Naive thymus-derived CD4-positive, alpha-beta T cell (primary cell): ENCODE measurements at regions of chr17 and their contacts with region 1.

Region 1: DNA sequence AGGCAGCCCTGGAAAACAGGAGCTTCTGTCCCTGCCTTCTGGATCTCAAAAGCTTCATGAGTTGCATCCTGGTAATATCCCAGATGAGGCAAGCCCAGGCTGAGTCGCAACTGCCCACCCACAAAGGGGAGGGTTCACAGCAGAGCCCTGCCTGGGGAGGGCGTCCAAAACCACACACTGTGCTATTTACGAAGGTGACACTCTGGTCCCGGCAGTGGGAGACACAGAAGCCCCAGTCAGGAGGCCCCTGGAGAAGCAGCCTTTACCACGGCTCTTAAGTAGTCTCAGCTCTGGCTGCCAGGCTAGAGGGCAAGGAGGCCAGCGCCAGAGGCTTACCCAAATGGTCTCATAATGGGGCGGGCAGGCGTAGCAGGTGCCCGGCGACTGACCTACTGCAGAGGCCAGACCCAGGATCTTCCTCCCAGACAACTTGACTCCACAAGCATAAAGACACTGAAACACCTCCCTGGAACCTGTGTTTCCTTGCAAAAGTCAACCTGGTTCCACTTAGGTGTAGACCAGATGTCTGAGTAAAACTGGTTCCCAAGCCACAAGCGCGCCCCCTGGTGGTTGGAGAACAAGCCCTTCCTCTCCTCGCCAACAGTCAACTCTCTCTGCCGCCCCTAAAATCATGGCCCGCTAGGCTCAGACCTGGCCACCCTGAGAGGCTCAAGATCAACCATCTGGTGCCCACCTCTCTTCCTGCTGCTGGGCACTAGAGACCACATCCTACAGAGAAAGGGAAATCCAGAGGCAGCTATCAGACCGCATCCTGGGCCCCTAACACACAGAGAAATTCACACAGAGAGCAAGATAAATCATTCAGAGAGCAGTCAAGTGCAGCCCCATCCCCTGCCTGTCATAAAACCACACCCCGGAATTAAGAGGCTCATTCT is 5.2 kb downstream of the AXIN2 start:
- DNase-seq: peak; percentile 82 to 96 (median 88)
- ATAC-seq: peak; percentile 66
- H3K4me3 ChIP-seq: peak overlapping the region; percentile 48
- H3K4me3 Mint-ChIP-seq: peak overlapping the region in 1 of 10 donors; percentile 41
- H3K27ac ChIP-seq: no peak overlapping the region
- H3K27ac Mint-ChIP-seq: no peak overlapping the region
- H3K4me1 ChIP-seq: peaks cover 19 to 38% of the 10 kb centered on the region in 2 donors
- H3K4me1 Mint-ChIP-seq: peaks cover 0 to 29% (median 21%) of the 10 kb centered on the region in 7 donors
- H3K27me3 ChIP-seq: no peaks in the 10 kb centered on the region
- H3K27me3 Mint-ChIP-seq: peaks cover 0 to 15% (median 0%) of the 10 kb centered on the region in 5 donors

Region 2: DNA sequence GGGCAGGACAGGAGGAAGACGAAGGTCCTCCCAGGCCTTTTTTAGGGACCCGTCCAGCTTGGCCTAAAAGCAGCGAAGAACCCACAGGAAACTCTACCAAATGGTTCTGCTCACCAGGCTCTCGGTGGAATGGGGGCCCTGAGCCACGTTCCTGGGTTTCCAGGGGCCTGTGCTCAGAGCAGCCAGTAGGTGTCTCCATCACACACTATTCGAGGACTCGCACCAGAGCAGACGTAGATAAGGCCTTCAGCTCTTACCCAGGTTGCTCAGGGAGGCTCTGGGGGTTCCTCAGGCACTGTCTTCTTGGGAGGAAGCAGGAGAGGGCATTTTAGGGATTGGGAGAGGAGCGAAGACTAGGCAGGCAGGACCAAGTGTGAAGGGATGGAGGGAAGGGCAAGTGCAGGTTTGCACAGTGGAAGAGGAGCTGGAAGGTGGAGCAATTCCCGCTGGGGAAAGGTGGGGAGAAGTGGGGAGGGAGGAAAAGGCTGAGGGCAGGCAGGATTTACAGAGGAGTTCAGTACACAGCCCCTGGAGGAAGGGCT is 262.0 kb before region 1 on chr17:
- CTCF ChIA-PET with region 1: interaction called, 5 read pairs
- POLR2A ChIA-PET with region 1: no interaction called
- intact Hi-C with region 1: loop called (anchors 1 kb)
- DNase-seq: peak; percentile 15 to 70 (median 60)
- ATAC-seq: peak; percentile 86
- H3K4me3 ChIP-seq: no peak overlapping the region
- H3K4me3 Mint-ChIP-seq: no peak overlapping the region
- H3K27ac ChIP-seq: no peak overlapping the region
- H3K27ac Mint-ChIP-seq: peak overlapping the region in 1 of 9 donors; percentile 80
- H3K4me1 ChIP-seq: no peaks in the 10 kb centered on the region
- H3K4me1 Mint-ChIP-seq: peaks cover 0 to 5% (median 5%) of the 10 kb centered on the region in 7 donors
- H3K27me3 ChIP-seq: no peaks in the 10 kb centered on the region
- H3K27me3 Mint-ChIP-seq: peaks cover 0 to 18% (median 0%) of the 10 kb centered on the region in 5 donors

Region 3: GRCh38 chr17:65442691-65443090 is 113.6 kb before region 1 on chr17:
- CTCF ChIA-PET with region 1: no interaction called
- POLR2A ChIA-PET with region 1: no interaction called
- intact Hi-C with region 1: no loop called
- DNase-seq: no peak
- ATAC-seq: no peak
- H3K4me3 ChIP-seq: no peak overlapping the region
- H3K4me3 Mint-ChIP-seq: no peak overlapping the region
- H3K27ac ChIP-seq: no peak overlapping the region
- H3K27ac Mint-ChIP-seq: no peak overlapping the region
- H3K4me1 ChIP-seq: no peaks in the 10 kb centered on the region
- H3K4me1 Mint-ChIP-seq: no peaks in the 10 kb centered on the region
- H3K27me3 ChIP-seq: no peaks in the 10 kb centered on the region
- H3K27me3 Mint-ChIP-seq: peaks cover 8 to 37% (median 18%) of the 10 kb centered on the region in 5 donors

Region 4: GRCh38 chr17:65455972-65456343 is 100.3 kb before region 1 on chr17:
- CTCF ChIA-PET with region 1: interaction called, 6 read pairs
- POLR2A ChIA-PET with region 1: no interaction called
- intact Hi-C with region 1: loop called (anchors 1 kb)
- DNase-seq: peak in 7 of 9 donors; percentile 28 to 63 (median 48)
- ATAC-seq: peak; percentile 60
- H3K4me3 ChIP-seq: no peak overlapping the region
- H3K4me3 Mint-ChIP-seq: no peak overlapping the region
- H3K27ac ChIP-seq: no peak overlapping the region
- H3K27ac Mint-ChIP-seq: peak overlapping the region in 1 of 9 donors; percentile 22
- H3K4me1 ChIP-seq: no peaks in the 10 kb centered on the region
- H3K4me1 Mint-ChIP-seq: peaks cover 0 to 18% (median 5%) of the 10 kb centered on the region in 7 donors
- H3K27me3 ChIP-seq: no peaks in the 10 kb centered on the region
- H3K27me3 Mint-ChIP-seq: peaks cover 0 to 18% (median 0%) of the 10 kb centered on the region in 5 donors

Region 5: GRCh38 chr17:65537845-65538674 is 18.2 kb before region 1 on chr17:
- CTCF ChIA-PET with region 1: interaction called, 6 read pairs
- POLR2A ChIA-PET with region 1: interaction called, 8 read pairs
- intact Hi-C with region 1: loop called in 1 of 2 experiments (anchors 1 kb)
- DNase-seq: peak in 8 of 9 donors; percentile 36 to 83 (median 74)
- ATAC-seq: peak; percentile 58
- H3K4me3 ChIP-seq: peak overlapping the region; percentile 35
- H3K4me3 Mint-ChIP-seq: peak overlapping the region; percentile 76 to 90 (median 84)
- H3K27ac ChIP-seq: peak overlapping the region; percentile 65
- H3K27ac Mint-ChIP-seq: peak overlapping the region; percentile 59 to 96 (median 89)
- H3K4me1 ChIP-seq: peaks cover 0 to 30% of the 10 kb centered on the region in 2 donors
- H3K4me1 Mint-ChIP-seq: peaks cover 8 to 72% (median 57%) of the 10 kb centered on the region in 7 donors
- H3K27me3 ChIP-seq: no peaks in the 10 kb centered on the region
- H3K27me3 Mint-ChIP-seq: peaks cover 0 to 22% (median 0%) of the 10 kb centered on the region in 5 donors

Region 6: GRCh38 chr17:65656382-65657250 is 100.4 kb after region 1 on chr17:
- CTCF ChIA-PET with region 1: no interaction called
- POLR2A ChIA-PET with region 1: no interaction called
- intact Hi-C with region 1: no loop called
- DNase-seq: peak in 1 of 9 donors; percentile 24
- ATAC-seq: no peak
- H3K4me3 ChIP-seq: no peak overlapping the region
- H3K4me3 Mint-ChIP-seq: no peak overlapping the region
- H3K27ac ChIP-seq: no peak overlapping the region
- H3K27ac Mint-ChIP-seq: no peak overlapping the region
- H3K4me1 ChIP-seq: no peaks in the 10 kb centered on the region
- H3K4me1 Mint-ChIP-seq: peaks cover 3 to 22% (median 18%) of the 10 kb centered on the region in 7 donors
- H3K27me3 ChIP-seq: no peaks in the 10 kb centered on the region
- H3K27me3 Mint-ChIP-seq: peaks cover 0 to 3% (median 0%) of the 10 kb centered on the region in 5 donors

Region 7: DNA sequence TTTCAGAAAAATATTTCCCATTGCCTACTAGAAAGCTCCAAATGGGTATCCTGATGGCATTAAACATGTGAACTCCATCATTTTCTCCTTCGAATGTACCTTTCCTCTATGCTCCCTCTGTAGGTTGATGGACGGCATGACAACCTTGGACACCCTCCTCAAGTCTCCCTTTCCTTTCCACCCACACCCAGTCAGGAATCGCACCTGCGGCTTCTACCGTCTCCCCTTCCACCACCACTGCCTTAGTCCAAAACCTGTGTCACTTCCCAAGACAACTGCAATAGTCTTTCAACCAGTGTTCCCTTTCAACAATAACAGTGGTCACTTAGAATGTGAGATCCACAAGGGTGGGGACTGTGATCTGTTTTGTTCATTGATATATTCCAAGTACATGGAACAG is 238.3 kb after region 1 on chr17:
- CTCF ChIA-PET with region 1: interaction called, 7 read pairs
- POLR2A ChIA-PET with region 1: no interaction called
- intact Hi-C with region 1: loop called in 1 of 2 experiments (anchors 1 kb)
- DNase-seq: peak in 6 of 9 donors; percentile 11 to 36 (median 28)
- ATAC-seq: peak; percentile 37
- H3K4me3 ChIP-seq: no peak overlapping the region
- H3K4me3 Mint-ChIP-seq: no peak overlapping the region
- H3K27ac ChIP-seq: no peak overlapping the region
- H3K27ac Mint-ChIP-seq: no peak overlapping the region
- H3K4me1 ChIP-seq: no peaks in the 10 kb centered on the region
- H3K4me1 Mint-ChIP-seq: peaks cover 0 to 6% (median 0%) of the 10 kb centered on the region in 7 donors
- H3K27me3 ChIP-seq: no peaks in the 10 kb centered on the region
- H3K27me3 Mint-ChIP-seq: peaks cover 0 to 7% (median 0%) of the 10 kb centered on the region in 5 donors